ENCODE measurements at regions of chr9 and their contacts with region 1.

Region 1: GRCh38 chr9:92657296-92658094 is 12.4 kb downstream of the IPPK start:
- DNase-seq: no peak
- H3K4me3 ChIP-seq: no peak overlapping the region
- H3K27ac ChIP-seq: no peak overlapping the region
- H3K4me1 ChIP-seq: peaks cover 0 to 10% (median 3%) of the 10 kb centered on the region in 4 experiments; a peak in 4 of 7 replicates
- H3K27me3 ChIP-seq: no peaks in the 10 kb centered on the region
- CTCF ChIP-seq: peak; percentile 15 to 34 (median 32); a peak in 3 of 4 replicates
- EP300 ChIP-seq: peak in 1 of 2 experiments; percentile 25; a peak in 1 of 3 replicates
- POLR2A ChIP-seq: no peak
- RAD21 ChIP-seq: peak; percentile 7 to 14; a peak in 1 of 4 replicates

Region 2: GRCh38 chr9:92686954-92687353 is 29.5 kb after region 1 on chr9:
- CTCF ChIA-PET with region 1: interaction called, 13 read pairs
- POLR2A ChIA-PET with region 1: no interaction called
- DNase-seq: peak in 1 of 2 experiments; percentile 47
- H3K4me3 ChIP-seq: no peak overlapping the region
- H3K27ac ChIP-seq: no peak overlapping the region
- H3K4me1 ChIP-seq: no peaks in the 10 kb centered on the region
- H3K27me3 ChIP-seq: no peaks in the 10 kb centered on the region
- CTCF ChIP-seq: peak; percentile 10 to 48 (median 45); a peak in 3 of 4 replicates
- EP300 ChIP-seq: no peak
- POLR2A ChIP-seq: no peak
- RAD21 ChIP-seq: peak in 1 of 2 experiments; percentile 14; a peak in 1 of 4 replicates

Measured in H1 (cell line).